Activated T-helper 2 cell treated with anti-CD3 and anti-CD28 coated beads, Interferon-gamma antibody, Interleukin-2, Interleukin-4, amounts not matched to agents 10 μg/mL and 5 μg/mL and 100 μg/mL, durations not matched to agents 14 hours and 24 hours and 36 hours (primary cell): ENCODE measurements at regions of chr15 and their contacts with region 1.

Region 1: GRCh38 chr15:64731012-64731806 is 44.2 kb downstream of the RBPMS2 start:
- DNase-seq: peak; percentile 72
- H3K4me3 Mint-ChIP-seq: no peak overlapping the region
- H3K27ac Mint-ChIP-seq: no peak overlapping the region
- H3K4me1 Mint-ChIP-seq: peaks cover 10% of the 10 kb centered on the region
- H3K27me3 Mint-ChIP-seq: peaks cover 2% of the 10 kb centered on the region

Region 2: GRCh38 chr15:64686216-64686631 is 45.0 kb before region 1 on chr15:
- intact Hi-C with region 1: loop called (anchors 1 kb)
- DNase-seq: no peak
- H3K4me3 Mint-ChIP-seq: no peak overlapping the region
- H3K27ac Mint-ChIP-seq: peak overlapping the region; percentile 55
- H3K4me1 Mint-ChIP-seq: peaks cover 2% of the 10 kb centered on the region
- H3K27me3 Mint-ChIP-seq: no peaks in the 10 kb centered on the region

Region 3: DNA sequence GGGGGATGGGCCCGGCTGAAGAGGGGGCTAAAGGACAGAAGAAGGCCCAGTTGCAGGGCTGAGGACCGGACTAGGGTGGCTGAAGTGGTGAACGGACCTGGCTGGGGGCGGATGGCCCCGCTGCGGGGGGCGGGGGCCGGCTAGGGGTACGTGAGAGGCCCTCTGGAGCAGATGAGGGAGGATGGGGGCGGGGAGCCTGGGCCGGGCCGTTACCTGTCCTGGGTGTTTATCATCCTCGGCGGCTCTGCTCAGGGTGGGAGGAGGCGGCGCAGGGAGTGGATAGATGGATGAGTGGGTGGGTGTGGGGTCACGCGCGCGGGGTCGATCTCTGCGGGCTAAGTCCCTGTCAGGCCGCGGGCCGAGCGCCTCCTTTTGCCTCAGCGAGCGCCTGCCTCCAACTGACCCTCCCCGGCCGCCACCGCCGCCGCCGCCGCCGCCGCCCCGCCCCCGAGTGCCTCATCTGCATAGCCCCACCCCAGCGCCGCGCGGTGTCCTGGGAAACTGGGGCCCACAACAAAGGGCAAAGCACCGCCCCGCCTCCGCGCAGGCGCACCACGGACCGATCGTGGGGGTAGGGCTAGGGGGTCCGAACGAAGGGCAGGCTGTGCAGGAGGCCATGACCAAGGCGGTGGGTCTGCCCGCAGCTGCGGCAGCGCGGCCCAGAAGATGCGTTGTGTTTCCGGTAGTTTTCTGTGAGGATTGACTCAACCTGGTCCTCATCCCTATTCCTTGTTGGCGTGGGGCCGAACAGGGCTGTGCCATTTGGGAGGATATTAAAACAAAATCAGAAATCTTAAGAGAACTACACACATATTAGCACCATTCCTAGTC is 28.2 kb before region 1 on chr15:
- intact Hi-C with region 1: loop called (anchors 1 kb)
- DNase-seq: peak; percentile 92
- H3K4me3 Mint-ChIP-seq: peak overlapping the region; percentile 87
- H3K27ac Mint-ChIP-seq: peak overlapping the region; percentile 83
- H3K4me1 Mint-ChIP-seq: peaks cover 44% of the 10 kb centered on the region
- H3K27me3 Mint-ChIP-seq: no peaks in the 10 kb centered on the region

Region 4: DNA sequence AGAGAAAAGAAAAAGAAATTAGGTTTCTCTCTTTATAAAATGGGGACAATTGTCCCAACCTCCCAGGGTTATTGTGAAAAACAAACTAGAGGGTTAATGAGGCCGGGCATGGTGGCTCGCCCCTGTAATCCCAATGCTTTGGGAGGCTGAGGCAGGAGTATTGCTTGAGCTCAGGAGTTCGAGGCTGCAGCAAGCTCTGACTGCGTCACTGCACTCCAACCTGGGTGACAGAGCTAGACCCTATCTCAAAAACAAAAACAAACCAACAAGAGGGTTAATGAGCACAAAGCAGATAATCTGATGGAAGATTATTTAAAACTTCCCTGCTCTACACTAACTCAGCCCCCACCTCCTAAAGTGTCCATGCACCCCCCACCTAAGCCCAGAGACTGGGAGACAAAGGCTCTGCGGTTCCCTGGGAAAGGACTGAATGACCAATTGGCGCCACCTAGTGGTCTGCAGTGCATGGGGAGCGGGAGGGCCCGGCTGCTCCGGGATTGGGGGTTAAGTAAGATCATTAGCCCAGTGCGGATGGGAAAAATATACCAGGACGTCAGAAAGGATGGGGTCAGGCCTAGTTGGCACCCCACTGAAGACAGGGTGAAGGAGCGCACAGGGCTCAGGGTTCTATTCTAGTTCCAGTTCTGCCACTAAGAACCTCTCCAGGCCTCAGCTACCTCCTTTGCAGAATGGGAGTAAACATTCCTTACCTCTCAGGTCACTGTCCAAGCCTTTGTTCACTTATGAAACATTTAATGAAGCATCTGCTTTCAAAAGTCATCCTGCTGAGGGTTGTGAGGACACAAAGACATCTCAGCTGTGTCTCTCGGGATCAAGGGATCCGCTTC is 78.7 kb after region 1 on chr15:
- intact Hi-C with region 1: loop called (anchors 1 kb)
- DNase-seq: peak; percentile 50
- H3K4me3 Mint-ChIP-seq: no peak overlapping the region
- H3K27ac Mint-ChIP-seq: no peak overlapping the region
- H3K4me1 Mint-ChIP-seq: peaks cover 3% of the 10 kb centered on the region
- H3K27me3 Mint-ChIP-seq: peaks cover 9% of the 10 kb centered on the region

Region 5: GRCh38 chr15:64905119-64905831 is 174.1 kb after region 1 on chr15:
- intact Hi-C with region 1: loop called (anchors 1 kb)
- DNase-seq: peak; percentile 72
- H3K4me3 Mint-ChIP-seq: peak overlapping the region; percentile 49
- H3K27ac Mint-ChIP-seq: peak overlapping the region; percentile 13
- H3K4me1 Mint-ChIP-seq: peaks cover 24% of the 10 kb centered on the region
- H3K27me3 Mint-ChIP-seq: peaks cover 10% of the 10 kb centered on the region